GM12878 (cell line): ENCODE measurements at regions of chr2 and their contacts with region 1.

Region 1: DNA sequence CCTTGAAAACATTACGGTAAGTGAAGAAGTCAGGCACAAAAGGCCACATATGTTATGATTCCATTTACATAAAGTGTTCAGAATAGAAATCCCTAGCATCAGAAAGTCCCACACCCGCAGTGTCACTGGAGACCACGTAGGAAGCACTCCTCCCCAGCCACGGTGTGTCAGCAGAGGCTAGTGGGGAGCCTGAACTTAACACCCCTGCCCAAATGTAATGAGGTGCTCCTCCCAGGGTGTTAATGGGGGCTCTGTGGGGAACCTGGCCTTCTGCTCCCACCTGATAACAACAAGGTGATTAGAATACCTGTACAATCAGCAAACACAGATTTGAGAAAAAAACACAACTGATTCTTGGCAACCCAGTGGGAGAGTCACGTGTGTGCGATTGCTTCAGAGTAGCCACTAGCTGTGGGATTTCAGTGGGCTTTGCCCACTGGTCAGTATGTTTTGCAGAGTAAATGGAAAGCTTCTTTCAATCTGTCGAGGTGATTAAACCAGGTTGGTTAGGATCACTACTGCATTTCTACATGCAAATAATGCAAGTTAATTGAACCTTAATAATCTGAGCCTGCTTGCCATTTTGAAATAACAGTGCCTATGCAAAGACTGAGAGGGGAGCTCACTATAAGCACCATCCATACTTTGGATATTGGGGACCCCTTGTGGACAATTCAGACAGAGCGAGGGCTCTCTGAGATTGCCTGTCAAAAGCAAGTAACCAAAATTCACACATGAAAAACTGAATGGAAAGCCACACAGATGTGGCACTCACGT is 20.6 kb upstream of the ATRAID start:
- DNase-seq: no peak
- ATAC-seq: peak; percentile 97
- H3K4me3 ChIP-seq: no peak overlapping the region
- H3K27ac ChIP-seq: no peak overlapping the region
- H3K4me1 ChIP-seq: no peaks in the 10 kb centered on the region
- H3K27me3 ChIP-seq: no peaks in the 10 kb centered on the region
- CTCF ChIP-seq: peak; percentile 58 to 79 (median 77)
- EP300 ChIP-seq: no peak
- POLR2A ChIP-seq: no peak
- RAD21 ChIP-seq: peak; percentile 88

Region 2: DNA sequence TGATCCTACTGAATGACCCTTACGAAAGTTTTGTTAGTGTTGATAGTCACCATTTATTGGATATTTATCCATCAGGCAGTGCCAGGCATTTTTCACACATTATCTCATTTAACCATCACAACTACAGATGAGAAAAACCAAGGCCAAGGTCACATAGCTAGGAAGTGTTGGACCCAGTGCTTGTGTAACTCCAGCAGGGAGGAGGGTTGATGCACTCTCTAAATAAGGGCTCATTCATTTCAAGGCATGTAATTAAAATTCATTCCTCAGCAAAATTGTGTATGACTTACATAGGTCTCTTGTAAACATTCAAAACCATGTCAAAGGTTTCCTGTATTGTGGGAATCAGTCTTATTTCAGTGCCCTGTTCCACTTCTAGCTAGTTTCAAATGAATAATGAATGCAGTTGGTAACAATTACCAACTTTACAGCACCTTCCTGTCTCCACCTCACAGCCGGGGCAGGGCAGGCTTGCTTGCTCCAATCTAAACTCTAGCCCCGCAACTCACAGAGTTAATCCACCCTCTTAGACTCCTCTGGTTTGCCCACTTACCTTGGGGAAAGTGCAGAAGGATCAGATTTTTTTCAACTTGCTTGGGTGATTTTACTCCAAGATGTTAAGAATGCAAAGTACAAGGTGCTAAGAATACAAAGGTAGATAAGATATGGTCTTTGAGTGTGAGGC is 226.7 kb before region 1 on chr2:
- CTCF ChIA-PET with region 1: interaction called, 12 read pairs
- POLR2A ChIA-PET with region 1: no interaction called
- RAD21 ChIA-PET with region 1: interaction called, 9 read pairs
- SMC1A ChIA-PET with region 1: interaction called, 11 read pairs
- in situ Hi-C with region 1: loop called (anchors 5 kb)
- intact Hi-C with region 1: loop called (anchors 5 kb)
- DNase-seq: no peak
- ATAC-seq: no peak
- H3K4me3 ChIP-seq: no peak overlapping the region
- H3K27ac ChIP-seq: no peak overlapping the region
- H3K4me1 ChIP-seq: no peaks in the 10 kb centered on the region
- H3K27me3 ChIP-seq: peaks cover 1 to 2% of the 10 kb centered on the region in 2 experiments; a peak in 1 of 4 replicates
- CTCF ChIP-seq: no peak
- EP300 ChIP-seq: no peak
- POLR2A ChIP-seq: no peak
- RAD21 ChIP-seq: no peak

Region 3: GRCh38 chr2:27095745-27096651 is 95.2 kb before region 1 on chr2:
- CTCF ChIA-PET with region 1: interaction called, 26 read pairs
- POLR2A ChIA-PET with region 1: no interaction called
- RAD21 ChIA-PET with region 1: interaction called, 13 read pairs
- SMC1A ChIA-PET with region 1: interaction called, 19 read pairs
- in situ Hi-C with region 1: no loop called
- intact Hi-C with region 1: loop called (anchors 1 kb)
- DNase-seq: no peak
- ATAC-seq: peak; percentile 93
- H3K4me3 ChIP-seq: no peak overlapping the region
- H3K27ac ChIP-seq: no peak overlapping the region
- H3K4me1 ChIP-seq: no peaks in the 10 kb centered on the region; the same call in 1 of the 2 replicates
- H3K27me3 ChIP-seq: no peaks in the 10 kb centered on the region
- CTCF ChIP-seq: no peak
- EP300 ChIP-seq: no peak
- POLR2A ChIP-seq: no peak
- RAD21 ChIP-seq: no peak

Region 4: GRCh38 chr2:27133905-27134780 is 57.1 kb before region 1 on chr2 and contains the start of gene PREB:
- CTCF ChIA-PET with region 1: interaction called, 19 read pairs
- POLR2A ChIA-PET with region 1: no interaction called
- RAD21 ChIA-PET with region 1: interaction called, 12 read pairs
- SMC1A ChIA-PET with region 1: interaction called, 4 read pairs
- in situ Hi-C with region 1: no loop called
- intact Hi-C with region 1: no loop called
- DNase-seq: peak; percentile 88
- ATAC-seq: peak; percentile 98
- H3K4me3 ChIP-seq: peak within 1 kb of the TSS; percentile 97
- H3K27ac ChIP-seq: peak within 1 kb of the TSS; percentile 90
- H3K4me1 ChIP-seq: peaks cover 8% of the 10 kb centered on the region
- H3K27me3 ChIP-seq: no peaks in the 10 kb centered on the region
- CTCF ChIP-seq: peak; percentile 38 to 43 (median 41); a peak in 4 of 6 replicates
- EP300 ChIP-seq: no peak
- POLR2A ChIP-seq: peak; percentile 89
- RAD21 ChIP-seq: peak; percentile 45; the same call in 1 of the 2 replicates
- polyA plus RNA-seq, gene PREB: 26.3 to 45.7 TPM